Naive thymus-derived CD4-positive, alpha-beta T cell (primary cell): ENCODE measurements at regions of chr5 and their contacts with region 1.

Region 1: GRCh38 chr5:43484106-43484849 is 613 bp upstream of the TMEM267 start:
- DNase-seq: peak; percentile 69 to 91 (median 88)
- ATAC-seq: peak; percentile 83
- H3K4me3 ChIP-seq: peak overlapping the region; percentile 72
- H3K4me3 Mint-ChIP-seq: peak overlapping the region; percentile 95 to 100 (median 98)
- H3K27ac ChIP-seq: peak overlapping the region; percentile 92
- H3K27ac Mint-ChIP-seq: peak overlapping the region; percentile 97 to 100 (median 100)
- H3K4me1 ChIP-seq: peaks cover 20 to 28% of the 10 kb centered on the region in 2 donors
- H3K4me1 Mint-ChIP-seq: peaks cover 23 to 69% (median 60%) of the 10 kb centered on the region in 7 donors
- H3K27me3 ChIP-seq: no peaks in the 10 kb centered on the region
- H3K27me3 Mint-ChIP-seq: no peaks in the 10 kb centered on the region

Region 2: DNA sequence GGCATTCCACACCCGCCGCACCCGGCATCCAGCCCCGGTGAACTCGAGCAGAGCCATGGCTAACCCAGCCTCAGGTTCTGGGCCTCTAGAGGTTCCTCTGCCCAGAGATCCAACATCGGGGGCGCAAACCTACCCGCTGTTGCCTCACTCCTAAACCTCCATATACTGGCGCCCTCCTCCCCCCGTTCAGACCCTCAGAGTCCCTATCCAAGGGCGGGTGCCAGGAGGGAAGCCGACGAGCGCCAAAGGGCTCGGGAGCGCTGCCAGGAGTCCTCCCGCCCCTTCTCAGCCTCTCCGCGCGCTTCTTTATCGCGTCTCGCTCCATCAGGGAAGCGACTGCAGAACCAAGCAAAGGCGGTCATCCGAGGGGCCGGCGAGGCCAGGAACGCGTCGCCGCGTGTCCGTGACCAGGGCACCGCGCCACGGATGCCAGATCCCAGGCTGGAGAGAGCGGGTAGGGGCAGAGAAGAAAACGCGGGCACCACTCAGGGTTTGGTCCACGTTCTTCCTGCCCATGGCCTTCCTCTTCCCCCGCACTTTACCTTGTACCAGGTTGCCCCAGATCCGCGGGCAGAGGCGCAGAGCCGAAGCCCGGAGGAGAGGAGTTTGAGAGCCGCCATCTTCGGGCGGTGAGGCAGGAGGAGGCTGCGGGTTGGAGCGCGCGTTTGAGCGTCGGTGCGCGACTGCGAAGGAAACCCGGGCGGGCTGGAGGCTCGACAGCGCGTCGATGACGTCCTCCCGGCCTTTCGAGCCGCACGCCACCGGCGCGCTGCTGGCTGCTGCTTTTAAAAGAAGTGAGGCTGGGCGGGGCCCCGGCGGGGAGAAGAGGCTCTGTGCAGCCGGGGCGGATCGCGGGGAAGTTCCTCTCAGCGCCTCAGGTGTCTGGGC is 1614.3 kb before region 1 on chr5 and contains the start of gene OXCT1:
- CTCF ChIA-PET with region 1: no interaction called
- POLR2A ChIA-PET with region 1: interaction called, 4 read pairs
- intact Hi-C with region 1: loop called in 1 of 2 experiments (anchors 1 kb)
- DNase-seq: peak; percentile 88 to 96 (median 95)
- ATAC-seq: peak; percentile 97
- H3K4me3 ChIP-seq: peak within 1 kb of the TSS; percentile 91
- H3K4me3 Mint-ChIP-seq: peak within 1 kb of the TSS; percentile 85 to 94 (median 90)
- H3K27ac ChIP-seq: peak within 1 kb of the TSS; percentile 97
- H3K27ac Mint-ChIP-seq: peak within 1 kb of the TSS; percentile 89 to 98 (median 97)
- H3K4me1 ChIP-seq: peaks cover 16% of the 10 kb centered on the region in 2 donors
- H3K4me1 Mint-ChIP-seq: peaks cover 18 to 63% (median 57%) of the 10 kb centered on the region in 7 donors
- H3K27me3 ChIP-seq: no peaks in the 10 kb centered on the region
- H3K27me3 Mint-ChIP-seq: no peaks in the 10 kb centered on the region
- total RNA-seq, gene OXCT1: 18.6 to 53.1 (median 30.0) TPM

Region 3: DNA sequence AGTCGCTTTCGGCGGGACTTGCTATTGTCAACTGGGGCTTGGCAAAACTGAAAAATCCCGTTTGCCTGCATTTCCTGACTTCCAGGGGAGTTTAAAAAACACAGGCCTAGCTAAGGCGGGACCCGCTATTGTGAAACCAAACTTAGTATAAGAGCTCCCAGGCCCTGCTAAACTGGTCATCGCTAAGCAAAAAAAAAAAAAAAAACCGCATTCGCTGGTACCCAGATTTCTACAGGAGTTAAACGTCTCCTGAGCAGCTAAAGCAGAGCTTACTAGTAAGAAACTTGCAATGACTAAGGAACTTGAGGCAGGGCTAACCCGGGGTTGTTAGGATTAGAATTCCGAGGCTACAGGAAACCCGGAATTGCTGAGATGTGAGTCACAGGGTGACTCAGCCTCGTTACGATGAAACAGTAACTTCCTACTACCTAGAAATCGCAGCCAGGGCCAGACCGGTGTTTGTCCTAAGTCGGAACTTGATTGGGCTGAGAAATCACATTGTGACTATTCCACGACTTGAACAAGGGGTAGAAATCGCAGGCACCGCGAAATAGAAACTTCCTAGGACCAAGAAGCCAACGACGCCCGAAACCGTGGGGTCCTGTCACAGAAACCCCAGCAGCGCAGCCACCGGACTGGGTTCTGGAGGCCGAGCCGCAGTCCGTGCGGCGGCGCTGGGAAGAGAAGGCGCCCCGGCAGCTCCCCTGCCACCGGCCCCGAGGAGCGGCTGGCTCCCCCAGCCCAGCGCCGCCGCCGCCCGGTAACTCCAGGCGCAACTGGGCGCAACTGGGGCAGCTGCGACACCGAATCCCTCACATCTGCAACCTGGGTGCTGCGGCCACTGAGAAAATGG is 533.6 kb before region 1 on chr5:
- CTCF ChIA-PET with region 1: interaction called, 3 read pairs
- POLR2A ChIA-PET with region 1: interaction called, 40 read pairs
- intact Hi-C with region 1: loop called (anchors 1 kb)
- DNase-seq: peak in 8 of 9 donors; percentile 39 to 77 (median 51)
- ATAC-seq: peak; percentile 51
- H3K4me3 ChIP-seq: peak overlapping the region; percentile 80
- H3K4me3 Mint-ChIP-seq: peak overlapping the region; percentile 87 to 99 (median 97)
- H3K27ac ChIP-seq: peak overlapping the region; percentile 98
- H3K27ac Mint-ChIP-seq: peak overlapping the region; percentile 97 to 100 (median 99)
- H3K4me1 ChIP-seq: peaks cover 5 to 22% of the 10 kb centered on the region in 2 donors
- H3K4me1 Mint-ChIP-seq: peaks cover 13 to 51% (median 23%) of the 10 kb centered on the region in 7 donors
- H3K27me3 ChIP-seq: no peaks in the 10 kb centered on the region
- H3K27me3 Mint-ChIP-seq: peaks cover 0 to 9% (median 0%) of the 10 kb centered on the region in 5 donors

Region 4: DNA sequence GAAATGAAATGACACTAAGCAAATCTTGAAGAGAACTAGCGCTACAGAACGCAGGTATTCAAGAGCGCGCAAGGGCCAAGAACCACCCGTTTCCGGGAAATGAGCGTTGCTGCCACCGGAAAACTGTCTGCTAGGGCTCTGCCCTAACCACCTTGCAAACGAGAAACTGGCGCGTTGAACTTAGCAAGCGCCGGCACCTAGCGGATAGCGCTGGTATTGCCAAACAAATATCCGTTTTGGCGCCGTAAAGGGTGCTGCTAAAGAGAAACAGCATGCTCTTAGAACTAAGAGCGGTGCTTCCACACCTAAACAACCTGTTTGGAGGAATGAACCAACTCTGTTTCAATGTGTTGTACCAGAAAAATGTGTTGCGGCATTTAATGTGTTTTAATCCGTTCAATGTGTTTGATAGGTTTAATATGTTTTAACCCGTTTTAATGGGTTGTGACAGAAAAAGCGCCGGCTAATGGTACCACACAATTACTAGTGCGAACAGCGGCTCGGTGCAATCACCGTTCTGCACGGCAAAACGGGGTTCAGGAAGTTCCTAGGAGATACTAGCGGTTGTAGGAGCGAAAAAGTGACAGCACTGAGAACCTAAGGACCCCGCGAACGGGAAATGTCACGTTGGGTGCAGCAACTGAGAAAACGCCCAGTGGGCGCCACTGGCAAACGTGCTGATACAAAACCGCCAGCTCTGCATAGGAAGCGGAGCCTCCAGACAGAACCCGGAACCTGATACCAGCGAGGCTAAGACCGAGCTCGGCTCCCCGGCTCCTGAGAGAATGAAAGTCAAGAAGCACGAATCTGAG is 443.8 kb before region 1 on chr5 and contains the start of gene ANXA2R:
- CTCF ChIA-PET with region 1: interaction called, 6 read pairs
- POLR2A ChIA-PET with region 1: interaction called, 69 read pairs
- intact Hi-C with region 1: loop called (anchors 1 kb)
- DNase-seq: peak; percentile 76 to 98 (median 96)
- ATAC-seq: peak; percentile 72
- H3K4me3 ChIP-seq: peak within 1 kb of the TSS; percentile 73
- H3K4me3 Mint-ChIP-seq: peak within 1 kb of the TSS; percentile 82 to 99 (median 98)
- H3K27ac ChIP-seq: peak within 1 kb of the TSS; percentile 96
- H3K27ac Mint-ChIP-seq: peak within 1 kb of the TSS; percentile 93 to 100 (median 99)
- H3K4me1 ChIP-seq: peaks cover 17 to 31% of the 10 kb centered on the region in 2 donors
- H3K4me1 Mint-ChIP-seq: peaks cover 14 to 75% (median 45%) of the 10 kb centered on the region in 7 donors
- H3K27me3 ChIP-seq: no peaks in the 10 kb centered on the region
- H3K27me3 Mint-ChIP-seq: no peaks in the 10 kb centered on the region
- total RNA-seq, gene ANXA2R: 13.2 to 61.4 (median 42.0) TPM

Region 5: GRCh38 chr5:43191740-43192557 is 292.3 kb before region 1 on chr5 and contains the start of gene NIM1K:
- CTCF ChIA-PET with region 1: no interaction called
- POLR2A ChIA-PET with region 1: no interaction called
- intact Hi-C with region 1: loop called (anchors 1 to 10 kb)
- DNase-seq: peak in 8 of 9 donors; percentile 7 to 55 (median 16)
- ATAC-seq: peak; percentile 51
- H3K4me3 ChIP-seq: peak within 1 kb of the TSS; percentile 63
- H3K4me3 Mint-ChIP-seq: peak within 1 kb of the TSS; percentile 81 to 94 (median 88)
- H3K27ac ChIP-seq: no peak within 1 kb of the TSS
- H3K27ac Mint-ChIP-seq: peak within 1 kb of the TSS in 6 of 9 donors; percentile 21 to 86 (median 71)
- H3K4me1 ChIP-seq: peaks cover 4 to 18% of the 10 kb centered on the region in 2 donors
- H3K4me1 Mint-ChIP-seq: peaks cover 11 to 33% (median 23%) of the 10 kb centered on the region in 7 donors
- H3K27me3 ChIP-seq: peaks cover 0 to 5% of the 10 kb centered on the region in 2 donors
- H3K27me3 Mint-ChIP-seq: peaks cover 15 to 22% (median 19%) of the 10 kb centered on the region in 5 donors
- total RNA-seq, gene NIM1K: 0.40 to 0.97 (median 0.61) TPM

Region 6: DNA sequence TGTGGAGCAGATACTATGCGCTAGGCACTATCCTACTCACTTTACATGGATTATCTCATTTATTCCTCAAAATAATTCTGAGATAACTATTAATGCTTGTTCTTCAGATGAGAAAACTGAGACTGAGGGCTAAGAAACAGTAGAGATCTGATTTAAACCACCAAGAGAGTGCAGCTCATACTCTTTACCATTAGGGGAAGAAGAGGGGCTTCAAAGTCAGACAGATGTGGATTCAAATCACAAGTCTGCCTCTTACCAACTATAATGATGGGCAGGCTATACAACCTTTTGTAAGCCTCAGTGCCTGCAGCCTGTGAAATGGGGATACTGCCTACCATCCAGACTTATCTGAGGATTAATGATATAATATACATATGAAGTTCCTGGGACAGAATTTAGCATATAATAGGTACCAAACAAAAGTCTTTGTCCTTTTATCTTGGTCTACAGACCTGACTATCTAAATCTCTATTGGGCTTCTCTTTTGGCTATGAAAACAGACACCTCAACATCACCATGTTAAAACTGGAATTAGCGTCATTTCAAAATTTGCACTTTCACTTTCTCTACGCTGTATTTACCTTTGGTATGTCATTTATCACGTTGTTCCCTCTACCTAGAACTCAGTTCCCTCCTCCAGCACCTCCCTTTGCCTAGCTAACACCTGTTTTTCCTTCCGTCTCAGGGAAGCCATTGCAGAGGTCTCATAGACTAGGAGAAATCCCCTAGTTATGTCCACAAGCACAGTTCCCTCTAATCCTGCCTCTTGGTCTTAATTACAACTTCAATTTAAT is 13.2 kb after region 1 on chr5:
- CTCF ChIA-PET with region 1: interaction called, 5 read pairs
- POLR2A ChIA-PET with region 1: interaction called, 16 read pairs
- intact Hi-C with region 1: no loop called
- DNase-seq: no peak
- ATAC-seq: no peak
- H3K4me3 ChIP-seq: no peak overlapping the region
- H3K4me3 Mint-ChIP-seq: no peak overlapping the region
- H3K27ac ChIP-seq: no peak overlapping the region
- H3K27ac Mint-ChIP-seq: no peak overlapping the region
- H3K4me1 ChIP-seq: no peaks in the 10 kb centered on the region
- H3K4me1 Mint-ChIP-seq: no peaks in the 10 kb centered on the region
- H3K27me3 ChIP-seq: no peaks in the 10 kb centered on the region
- H3K27me3 Mint-ChIP-seq: no peaks in the 10 kb centered on the region

Region 7: DNA sequence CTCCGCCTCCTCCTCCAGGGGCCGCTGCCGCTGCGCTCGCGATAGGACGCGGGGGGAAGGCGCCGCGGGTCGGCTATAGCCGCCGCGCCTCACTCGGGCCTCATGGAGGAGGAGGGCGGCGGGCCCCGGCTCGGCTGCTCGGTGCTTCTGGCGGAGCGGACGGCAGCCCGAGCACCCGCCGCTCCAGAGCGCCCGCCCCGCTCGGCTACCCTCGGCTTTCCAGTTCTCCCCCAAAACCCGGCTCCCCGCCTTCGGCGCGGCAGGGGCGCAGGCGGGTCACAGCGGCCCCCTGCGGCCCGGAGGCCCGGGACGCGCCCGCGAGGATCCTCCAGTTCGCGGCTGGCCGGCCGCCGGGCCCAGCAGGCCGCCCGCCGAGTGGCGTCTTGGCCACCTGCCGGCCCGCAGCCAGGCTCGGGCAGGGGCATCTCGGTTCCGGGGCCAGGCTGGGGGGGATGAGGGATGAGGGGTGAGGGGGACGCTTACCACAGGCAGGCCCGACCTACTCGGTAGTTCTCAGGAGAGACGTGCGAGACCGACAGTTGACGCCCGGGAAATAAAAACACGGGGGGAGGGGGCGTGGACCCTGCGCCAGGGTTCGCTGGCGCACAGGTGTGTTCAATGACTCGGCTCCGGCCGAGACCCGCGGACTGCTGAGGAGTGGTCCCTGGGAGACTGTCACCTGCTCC is 72.7 kb after region 1 on chr5 and contains the start of gene PAIP1:
- CTCF ChIA-PET with region 1: interaction called, 14 read pairs
- POLR2A ChIA-PET with region 1: interaction called, 61 read pairs
- intact Hi-C with region 1: loop called (anchors 1 kb)
- DNase-seq: peak; percentile 80 to 89 (median 87)
- ATAC-seq: peak; percentile 89
- H3K4me3 ChIP-seq: peak within 1 kb of the TSS; percentile 79
- H3K4me3 Mint-ChIP-seq: peak within 1 kb of the TSS in 7 of 10 donors; percentile 88 to 97 (median 95)
- H3K27ac ChIP-seq: peak within 1 kb of the TSS; percentile 96
- H3K27ac Mint-ChIP-seq: peak within 1 kb of the TSS; percentile 91 to 99 (median 98)
- H3K4me1 ChIP-seq: peaks cover 17 to 30% of the 10 kb centered on the region in 2 donors
- H3K4me1 Mint-ChIP-seq: peaks cover 6 to 17% (median 7%) of the 10 kb centered on the region in 7 donors
- H3K27me3 ChIP-seq: no peaks in the 10 kb centered on the region
- H3K27me3 Mint-ChIP-seq: peaks cover 0 to 18% (median 5%) of the 10 kb centered on the region in 5 donors
- total RNA-seq, gene PAIP1: 20.7 to 41.7 (median 39.2) TPM